ENCODE measurements at regions of chr17 and their contacts with region 1.

Region 1: GRCh38 chr17:49997791-49998703 is 3.0 kb upstream of the DLX3 start:
- DNase-seq: peak; percentile 73 to 80 (median 78)
- ATAC-seq: peak; percentile 77 to 82 (median 78)
- H3K4me3 ChIP-seq: no peak overlapping the region
- H3K27ac ChIP-seq: no peak overlapping the region
- H3K4me1 ChIP-seq: peaks cover 0 to 38% (median 23%) of the 10 kb centered on the region in 12 donors
- H3K27me3 ChIP-seq: peaks cover 33 to 96% (median 81%) of the 10 kb centered on the region in 9 donors
- CTCF ChIP-seq: peak; percentile 86 to 98 (median 95)
- POLR2A ChIP-seq: no peak

Region 2: GRCh38 chr17:49315551-49316257 is 682.3 kb before region 1 on chr17:
- intact Hi-C with region 1: loop called in 1 of 10 experiments (anchors 10 kb)
- DNase-seq: peak in 4 of 5 donors; percentile 68 to 71 (median 69)
- ATAC-seq: peak; percentile 92 to 99 (median 98)
- H3K4me3 ChIP-seq: peak overlapping the region in 3 of 12 donors; percentile 6 to 20 (median 7)
- H3K27ac ChIP-seq: peak overlapping the region in 1 of 12 donors; percentile 35
- H3K4me1 ChIP-seq: peaks cover 0 to 23% (median 0%) of the 10 kb centered on the region in 12 donors
- H3K27me3 ChIP-seq: no peaks in the 10 kb centered on the region
- CTCF ChIP-seq: peak; percentile 61 to 92 (median 82)
- POLR2A ChIP-seq: no peak

Region 3: DNA sequence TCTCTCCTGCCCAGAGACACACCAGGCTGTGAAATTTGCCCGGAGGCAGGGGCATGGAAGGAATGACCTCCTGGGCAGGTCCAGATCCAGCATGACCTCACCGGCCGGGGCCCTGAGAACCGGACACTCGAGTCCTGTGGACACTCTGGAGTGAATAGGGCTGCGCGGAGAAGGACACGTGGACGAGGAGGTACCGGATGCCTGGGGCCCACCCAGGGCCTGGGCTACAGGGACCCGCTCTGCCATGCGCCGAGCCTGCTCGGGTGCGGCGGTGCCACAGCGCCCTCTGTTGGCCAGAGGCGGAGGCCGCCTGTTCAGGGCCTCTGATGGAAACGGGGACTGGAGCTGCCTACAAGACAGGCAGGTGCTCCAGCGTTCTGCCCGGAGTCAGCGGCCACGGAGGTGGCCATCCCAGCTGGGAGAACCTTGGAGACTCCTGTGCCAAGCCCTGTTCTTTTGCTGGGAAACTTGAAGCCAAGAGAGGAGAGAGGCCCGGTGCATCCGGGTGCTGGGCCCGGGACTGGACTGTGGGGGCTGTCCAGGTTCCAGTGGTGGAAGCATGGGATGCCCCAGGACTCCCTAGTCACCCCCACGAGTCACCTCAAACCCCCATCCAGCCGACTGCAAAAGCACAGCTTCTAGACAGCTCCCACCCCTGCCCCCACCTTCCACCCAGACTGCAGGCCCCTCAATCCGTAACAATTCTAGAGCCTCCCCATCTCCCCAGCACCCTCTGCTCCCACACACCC is 441.6 kb before region 1 on chr17:
- intact Hi-C with region 1: loop called in 4 of 10 experiments (anchors 5 to 10 kb)
- DNase-seq: peak; percentile 65 to 88 (median 74)
- ATAC-seq: peak; percentile 69 to 93 (median 88)
- H3K4me3 ChIP-seq: no peak overlapping the region
- H3K27ac ChIP-seq: no peak overlapping the region
- H3K4me1 ChIP-seq: peaks cover 0 to 8% (median 4%) of the 10 kb centered on the region in 12 donors
- H3K27me3 ChIP-seq: peaks cover 0 to 9% (median 0%) of the 10 kb centered on the region in 9 donors
- CTCF ChIP-seq: peak; percentile 95 to 100 (median 98)
- POLR2A ChIP-seq: no peak

Region 4: DNA sequence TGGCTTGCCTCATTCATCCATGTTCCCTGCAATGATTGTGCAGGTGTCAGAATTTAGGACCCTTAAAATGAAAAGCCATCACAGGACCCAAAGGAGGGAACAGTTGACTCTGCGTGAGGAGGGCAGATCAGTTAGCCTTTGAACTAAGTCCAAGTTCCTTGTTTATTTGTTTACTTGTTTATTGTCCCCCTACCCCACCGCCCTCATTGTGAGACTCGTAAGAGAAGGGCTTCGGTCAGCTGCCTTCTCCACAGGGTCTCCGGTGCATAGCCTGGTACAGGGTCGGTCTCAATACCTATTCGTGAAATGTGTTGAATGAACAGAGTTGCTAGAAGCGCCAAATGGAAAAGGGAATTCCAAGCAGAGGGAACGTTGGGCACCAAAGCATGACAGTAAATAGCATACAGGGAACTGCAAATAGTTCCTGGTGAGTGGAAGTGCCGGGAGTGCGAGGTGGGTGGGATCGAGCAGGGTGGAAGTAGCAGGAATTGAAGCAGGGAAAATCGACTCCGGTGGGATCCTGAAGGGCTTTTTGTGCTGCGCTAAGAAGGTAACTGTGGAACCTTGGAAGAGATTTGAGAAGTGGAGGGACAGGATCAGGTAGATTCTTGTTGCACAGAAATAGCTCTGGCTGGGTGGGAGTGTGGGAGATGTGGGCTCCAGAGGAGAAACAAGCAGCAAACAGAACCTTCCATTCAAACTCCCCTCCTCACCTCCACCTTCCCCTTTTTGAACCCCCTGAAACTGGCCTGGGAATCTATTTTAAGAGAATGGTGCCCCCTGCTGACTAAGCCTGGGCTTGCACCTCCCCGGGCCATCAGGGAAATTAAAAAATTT is 303.0 kb before region 1 on chr17:
- intact Hi-C with region 1: loop called in 4 of 10 experiments (anchors 5 to 10 kb)
- DNase-seq: peak in 3 of 5 donors; percentile 39 to 58 (median 52)
- ATAC-seq: no peak
- H3K4me3 ChIP-seq: peak overlapping the region in 1 of 12 donors; percentile 16
- H3K27ac ChIP-seq: no peak overlapping the region
- H3K4me1 ChIP-seq: peaks cover 0 to 47% (median 26%) of the 10 kb centered on the region in 12 donors
- H3K27me3 ChIP-seq: no peaks in the 10 kb centered on the region
- CTCF ChIP-seq: peak; percentile 81 to 97 (median 92)
- POLR2A ChIP-seq: no peak

Region 5: GRCh38 chr17:49861150-49861892 is 136.7 kb before region 1 on chr17:
- intact Hi-C with region 1: loop called (anchors 1 to 5 kb)
- DNase-seq: peak in 1 of 5 donors; percentile 58
- ATAC-seq: peak in 2 of 4 donors; percentile 47 to 59
- H3K4me3 ChIP-seq: no peak overlapping the region
- H3K27ac ChIP-seq: no peak overlapping the region
- H3K4me1 ChIP-seq: peaks cover 0 to 14% (median 0%) of the 10 kb centered on the region in 12 donors
- H3K27me3 ChIP-seq: peaks cover 0 to 9% (median 0%) of the 10 kb centered on the region in 9 donors
- CTCF ChIP-seq: peak; percentile 75 to 90 (median 86)
- POLR2A ChIP-seq: no peak

Region 6: DNA sequence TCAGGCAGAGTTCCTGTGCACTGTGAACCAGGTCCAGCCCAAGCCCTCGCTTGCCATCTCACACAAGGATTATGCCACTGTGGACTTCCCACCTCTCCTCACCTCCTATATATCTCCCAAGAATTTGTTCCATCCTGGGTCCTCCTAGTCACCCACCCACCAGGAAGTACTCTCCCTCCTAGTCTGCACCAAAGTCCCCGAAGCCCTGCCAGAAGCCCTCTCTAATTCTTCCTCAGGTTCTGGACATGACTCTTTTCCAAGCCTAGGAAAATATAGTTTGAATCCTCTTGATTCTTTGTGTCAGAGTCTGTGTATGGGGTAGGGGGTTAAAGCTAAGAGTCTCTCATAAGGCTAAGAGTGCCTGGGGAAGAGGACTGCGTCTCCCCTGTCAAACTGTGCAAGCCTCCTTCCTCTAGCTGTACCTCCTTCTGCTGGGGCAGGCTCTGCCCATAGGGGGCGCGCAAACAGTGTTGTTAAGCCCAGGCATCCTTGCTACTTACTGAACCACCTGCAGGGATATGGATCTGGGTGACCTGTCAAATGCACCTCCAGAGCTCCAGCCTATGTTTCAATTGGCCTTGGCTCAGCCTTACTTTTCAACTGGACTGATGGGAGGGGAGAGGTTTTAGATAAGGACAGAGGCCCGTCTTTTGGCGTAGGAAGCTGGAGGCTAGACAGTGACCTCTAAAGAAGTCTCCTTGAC is 45.7 kb before region 1 on chr17:
- intact Hi-C with region 1: loop called in 6 of 10 experiments (anchors 1 to 5 kb)
- DNase-seq: peak; percentile 46 to 82 (median 60)
- ATAC-seq: peak in 3 of 4 donors; percentile 70 to 79 (median 74)
- H3K4me3 ChIP-seq: no peak overlapping the region
- H3K27ac ChIP-seq: no peak overlapping the region
- H3K4me1 ChIP-seq: peaks cover 0 to 3% (median 0%) of the 10 kb centered on the region in 12 donors
- H3K27me3 ChIP-seq: peaks cover 0 to 60% (median 17%) of the 10 kb centered on the region in 9 donors
- CTCF ChIP-seq: peak; percentile 43 to 82 (median 69)
- POLR2A ChIP-seq: no peak